ENCODE measurements at regions of chr2 and their contacts with region 1.

Region 1: DNA sequence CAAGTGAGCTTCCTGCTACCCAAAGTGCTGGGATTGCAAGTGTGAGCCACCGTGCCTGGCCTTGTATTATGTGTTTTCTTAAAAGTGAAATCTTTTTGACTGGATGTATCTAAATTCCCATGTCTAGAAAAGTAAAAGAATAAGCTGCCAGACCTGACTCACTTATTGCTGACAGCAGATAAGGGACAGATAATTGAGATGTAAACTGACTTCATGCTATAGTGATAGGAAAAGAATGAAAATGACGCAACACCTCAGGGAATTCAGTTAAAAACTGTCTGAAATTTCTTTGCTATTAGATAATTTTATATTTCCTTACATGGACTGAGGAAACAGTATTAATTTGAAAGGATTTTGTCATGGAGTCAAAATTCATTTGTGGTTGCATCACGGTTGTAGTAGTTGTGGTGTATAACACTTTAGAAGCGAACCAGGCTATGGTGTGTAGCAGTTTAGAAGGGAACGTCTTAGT is 19.4 kb downstream of the TTC27 start:
- DNase-seq: peak; percentile 59
- H3K4me3 ChIP-seq: no peak overlapping the region
- H3K27ac ChIP-seq: peak overlapping the region; percentile 5
- H3K4me1 ChIP-seq: no peaks in the 10 kb centered on the region
- H3K27me3 ChIP-seq: no peaks in the 10 kb centered on the region
- CTCF ChIP-seq: no peak

Region 2: DNA sequence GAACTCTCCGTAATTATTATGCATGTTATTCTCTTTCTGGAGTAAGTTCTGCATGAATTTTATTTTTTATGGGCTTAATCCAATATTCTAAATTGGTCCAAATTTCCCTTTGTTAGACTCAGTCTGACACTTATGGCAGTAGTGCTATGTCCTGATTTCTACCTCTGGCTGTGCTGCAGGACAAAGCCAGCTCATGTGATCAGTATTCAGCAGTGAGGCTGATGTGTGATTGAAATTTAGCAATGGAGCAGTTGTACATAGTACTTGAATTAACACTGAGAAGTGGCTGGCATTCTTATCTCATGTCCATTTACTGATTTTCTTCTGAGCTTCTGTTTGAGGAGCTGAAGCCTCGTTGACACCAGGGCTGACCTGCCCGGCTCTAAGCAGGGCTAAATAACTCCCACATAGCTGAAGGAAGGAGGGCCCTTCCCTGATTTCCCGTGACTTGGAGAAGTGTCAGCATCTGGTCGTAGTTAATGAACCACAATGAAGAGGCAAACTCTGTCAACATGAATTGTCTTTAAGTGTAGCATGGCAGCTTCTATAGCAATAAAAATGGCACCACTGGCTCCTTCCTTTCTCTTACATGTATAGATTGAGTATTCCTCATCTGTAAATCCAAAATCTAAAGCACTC is 670.3 kb after region 1 on chr2:
- CTCF ChIA-PET with region 1: no interaction called
- POLR2A ChIA-PET with region 1: interaction called, 12 read pairs
- intact Hi-C with region 1: no loop called
- DNase-seq: peak; percentile 10
- H3K4me3 ChIP-seq: no peak overlapping the region
- H3K27ac ChIP-seq: no peak overlapping the region
- H3K4me1 ChIP-seq: peaks cover 10% of the 10 kb centered on the region
- H3K27me3 ChIP-seq: no peaks in the 10 kb centered on the region
- CTCF ChIP-seq: no peak

Measured in A673 (cell line).